CD8-positive, alpha-beta T cell (primary cell): ENCODE measurements at regions of chr1 and their contacts with region 1.

Region 1: DNA sequence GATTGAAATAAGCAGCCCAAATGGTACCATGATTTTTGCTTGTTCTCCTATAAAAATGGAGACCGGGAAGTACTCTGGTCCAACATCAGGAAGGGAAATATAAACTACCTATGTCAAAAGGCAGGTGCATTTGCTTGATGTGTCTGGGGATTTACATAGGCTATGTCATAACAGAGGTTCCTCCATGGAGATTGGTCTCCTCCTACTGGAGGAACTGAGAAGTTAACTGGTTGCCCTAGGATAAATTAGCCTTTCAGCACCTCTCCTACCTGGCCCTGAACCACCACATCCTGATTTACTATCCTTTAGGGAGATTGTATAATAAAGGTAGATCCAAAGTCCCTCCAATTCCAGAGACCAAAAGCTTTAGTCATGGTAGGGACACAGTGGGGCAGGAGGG is 1109.3 kb upstream of the B3GALT2 start:
- DNase-seq: peak in 7 of 9 experiments; percentile 7 to 80 (median 39)
- ATAC-seq: peak; percentile 98
- H3K4me3 ChIP-seq: no peak overlapping the region
- H3K4me3 Mint-ChIP-seq: no peak overlapping the region
- H3K27ac ChIP-seq: no peak overlapping the region
- H3K27ac Mint-ChIP-seq: no peak overlapping the region
- H3K4me1 ChIP-seq: peaks cover 6% of the 10 kb centered on the region
- H3K4me1 Mint-ChIP-seq: peaks cover 14% of the 10 kb centered on the region
- H3K27me3 ChIP-seq: no peaks in the 10 kb centered on the region
- H3K27me3 Mint-ChIP-seq: no peaks in the 10 kb centered on the region
- CTCF ChIP-seq: peak; percentile 75

Region 2: GRCh38 chr1:192477630-192478029 is 1818.1 kb before region 1 on chr1:
- CTCF ChIA-PET with region 1: no interaction called
- POLR2A ChIA-PET with region 1: no interaction called
- intact Hi-C with region 1: loop called in 1 of 2 experiments (anchors 5 kb)
- DNase-seq: peak in 2 of 9 experiments; percentile 52 to 65
- ATAC-seq: peak; percentile 77
- H3K4me3 ChIP-seq: no peak overlapping the region
- H3K4me3 Mint-ChIP-seq: no peak overlapping the region
- H3K27ac ChIP-seq: no peak overlapping the region
- H3K27ac Mint-ChIP-seq: no peak overlapping the region
- H3K4me1 ChIP-seq: no peaks in the 10 kb centered on the region
- H3K4me1 Mint-ChIP-seq: no peaks in the 10 kb centered on the region
- H3K27me3 ChIP-seq: peaks cover 0 to 2% of the 10 kb centered on the region in 2 experiments
- H3K27me3 Mint-ChIP-seq: no peaks in the 10 kb centered on the region
- CTCF ChIP-seq: peak; percentile 64

Region 3: GRCh38 chr1:192801451-192801850 is 1494.2 kb before region 1 on chr1:
- CTCF ChIA-PET with region 1: no interaction called
- POLR2A ChIA-PET with region 1: no interaction called
- intact Hi-C with region 1: loop called in 1 of 2 experiments (anchors 5 kb)
- DNase-seq: no peak
- ATAC-seq: no peak
- H3K4me3 ChIP-seq: no peak overlapping the region
- H3K4me3 Mint-ChIP-seq: no peak overlapping the region
- H3K27ac ChIP-seq: no peak overlapping the region
- H3K27ac Mint-ChIP-seq: no peak overlapping the region
- H3K4me1 ChIP-seq: no peaks in the 10 kb centered on the region
- H3K4me1 Mint-ChIP-seq: no peaks in the 10 kb centered on the region
- H3K27me3 ChIP-seq: no peaks in the 10 kb centered on the region
- H3K27me3 Mint-ChIP-seq: no peaks in the 10 kb centered on the region
- CTCF ChIP-seq: no peak

Region 4: DNA sequence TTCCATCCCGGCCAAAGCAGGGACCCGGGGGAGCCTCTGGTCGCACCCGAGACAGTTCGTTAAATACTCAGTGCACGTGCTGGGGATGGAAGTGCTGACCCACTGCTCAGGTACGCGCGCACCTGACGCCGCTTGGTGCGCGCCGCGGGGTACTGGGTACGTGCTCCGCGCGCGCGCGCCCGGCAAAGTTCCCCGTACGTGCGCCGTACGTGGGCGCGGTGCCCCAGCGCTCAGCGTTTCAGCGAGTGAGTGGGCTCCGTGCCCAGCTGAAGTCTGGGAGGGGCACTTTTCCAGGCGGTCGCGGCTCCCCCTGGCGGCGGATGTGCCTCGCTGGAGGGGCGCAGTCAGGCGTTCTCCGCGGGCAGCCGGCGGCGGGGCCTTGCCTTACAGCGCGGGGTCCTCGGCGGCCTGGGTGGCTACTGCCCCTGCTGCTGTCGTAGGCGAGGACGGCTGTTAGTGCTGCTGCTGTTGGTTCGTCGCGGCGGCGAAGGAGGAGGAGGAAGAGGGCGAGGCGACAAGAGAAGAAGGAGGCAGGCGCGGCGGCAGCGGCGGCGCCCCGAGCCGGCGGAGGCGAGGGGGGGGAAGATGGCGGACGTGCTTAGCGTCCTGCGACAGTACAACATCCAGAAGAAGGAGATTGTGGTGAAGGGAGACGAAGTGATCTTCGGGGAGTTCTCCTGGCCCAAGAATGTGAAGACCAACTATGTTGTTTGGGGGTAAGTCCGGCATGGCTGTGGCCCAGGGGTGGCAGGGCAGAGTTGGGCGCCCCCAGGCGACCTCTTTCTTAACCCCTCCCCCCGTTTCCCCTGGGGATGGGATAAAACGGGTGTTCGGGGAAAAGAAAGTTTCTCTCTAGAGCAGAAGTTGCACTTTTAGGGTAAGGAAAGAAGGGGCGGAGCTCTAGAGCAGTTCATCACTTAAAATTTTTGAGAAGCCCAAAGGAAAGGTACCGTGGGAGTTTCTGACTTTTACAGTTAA is 1173.8 kb before region 1 on chr1 and contains the start of gene CDC73:
- CTCF ChIA-PET with region 1: no interaction called
- POLR2A ChIA-PET with region 1: no interaction called
- intact Hi-C with region 1: loop called in 1 of 2 experiments (anchors 2 kb)
- DNase-seq: peak; percentile 98 to 100 (median 99)
- ATAC-seq: peak; percentile 92
- H3K4me3 ChIP-seq: peak within 1 kb of the TSS; percentile 89 to 98
- H3K4me3 Mint-ChIP-seq: peak within 1 kb of the TSS; percentile 100
- H3K27ac ChIP-seq: peak within 1 kb of the TSS; percentile 94 to 96
- H3K27ac Mint-ChIP-seq: peak within 1 kb of the TSS; percentile 100
- H3K4me1 ChIP-seq: peaks cover 33% of the 10 kb centered on the region
- H3K4me1 Mint-ChIP-seq: peaks cover 55% of the 10 kb centered on the region
- H3K27me3 ChIP-seq: no peaks in the 10 kb centered on the region
- H3K27me3 Mint-ChIP-seq: no peaks in the 10 kb centered on the region
- CTCF ChIP-seq: peak; percentile 84
- total RNA-seq, gene CDC73: 73.9 to 78.8 TPM

Region 5: DNA sequence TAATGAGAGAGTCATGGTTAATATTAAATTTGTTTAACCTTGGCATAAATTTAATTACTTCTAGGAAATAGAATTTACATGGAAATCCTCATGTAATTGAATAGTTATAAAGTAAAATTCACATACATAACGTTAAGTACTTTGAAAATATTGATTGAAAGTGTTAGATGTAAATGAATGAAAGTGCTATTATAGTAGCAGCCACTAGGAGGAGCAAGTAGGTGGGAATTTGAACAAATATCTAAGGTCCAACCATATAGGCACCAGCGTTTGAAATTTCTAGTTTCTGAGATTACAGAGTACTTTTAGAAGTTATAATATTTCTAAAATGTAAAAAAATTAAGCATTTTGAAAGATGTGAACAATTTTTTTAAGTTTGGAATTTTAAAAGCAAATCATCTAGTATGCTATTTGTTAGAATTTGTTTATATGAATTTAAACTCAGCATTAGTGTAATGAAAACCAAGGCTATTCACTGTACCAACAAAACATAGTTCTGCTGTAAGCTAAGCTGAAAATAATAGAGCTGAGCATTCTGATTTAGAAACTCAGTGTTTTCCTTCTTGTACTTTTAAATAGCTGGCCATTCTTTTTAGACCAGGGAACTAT is 1112.6 kb before region 1 on chr1:
- CTCF ChIA-PET with region 1: interaction called, 13 read pairs
- POLR2A ChIA-PET with region 1: no interaction called
- intact Hi-C with region 1: loop called (anchors 1 kb)
- DNase-seq: peak in 3 of 9 experiments; percentile 18 to 71 (median 66)
- ATAC-seq: peak; percentile 76
- H3K4me3 ChIP-seq: no peak overlapping the region
- H3K4me3 Mint-ChIP-seq: peak overlapping the region; percentile 38
- H3K27ac ChIP-seq: no peak overlapping the region
- H3K27ac Mint-ChIP-seq: no peak overlapping the region
- H3K4me1 ChIP-seq: peaks cover 34% of the 10 kb centered on the region
- H3K4me1 Mint-ChIP-seq: peaks cover 54% of the 10 kb centered on the region
- H3K27me3 ChIP-seq: no peaks in the 10 kb centered on the region
- H3K27me3 Mint-ChIP-seq: no peaks in the 10 kb centered on the region
- CTCF ChIP-seq: peak; percentile 99

Region 6: GRCh38 chr1:193406901-193407300 is 888.8 kb before region 1 on chr1:
- CTCF ChIA-PET with region 1: no interaction called
- POLR2A ChIA-PET with region 1: no interaction called
- intact Hi-C with region 1: loop called (anchors 1 kb)
- DNase-seq: peak in 3 of 9 experiments; percentile 8 to 69 (median 57)
- ATAC-seq: peak; percentile 59
- H3K4me3 ChIP-seq: no peak overlapping the region
- H3K4me3 Mint-ChIP-seq: no peak overlapping the region
- H3K27ac ChIP-seq: no peak overlapping the region
- H3K27ac Mint-ChIP-seq: no peak overlapping the region
- H3K4me1 ChIP-seq: peaks cover 10% of the 10 kb centered on the region
- H3K4me1 Mint-ChIP-seq: peaks cover 16% of the 10 kb centered on the region
- H3K27me3 ChIP-seq: no peaks in the 10 kb centered on the region
- H3K27me3 Mint-ChIP-seq: no peaks in the 10 kb centered on the region
- CTCF ChIP-seq: peak; percentile 86

Region 7: GRCh38 chr1:194209920-194210319 is 85.8 kb before region 1 on chr1:
- CTCF ChIA-PET with region 1: no interaction called
- POLR2A ChIA-PET with region 1: no interaction called
- intact Hi-C with region 1: no loop called
- DNase-seq: no peak
- ATAC-seq: no peak
- H3K4me3 ChIP-seq: no peak overlapping the region
- H3K4me3 Mint-ChIP-seq: no peak overlapping the region
- H3K27ac ChIP-seq: no peak overlapping the region
- H3K27ac Mint-ChIP-seq: no peak overlapping the region
- H3K4me1 ChIP-seq: no peaks in the 10 kb centered on the region
- H3K4me1 Mint-ChIP-seq: no peaks in the 10 kb centered on the region
- H3K27me3 ChIP-seq: no peaks in the 10 kb centered on the region
- H3K27me3 Mint-ChIP-seq: no peaks in the 10 kb centered on the region
- CTCF ChIP-seq: no peak